B cell (primary cell): ENCODE measurements at regions of chr19 and their contacts with region 1.

Region 1: GRCh38 chr19:6862673-6863078 is 24.7 kb upstream of the ADGRE1 start:
- DNase-seq: peak; percentile 92
- ATAC-seq: peak; percentile 85
- H3K4me3 ChIP-seq: peak overlapping the region in 3 of 5 experiments; percentile 48 to 73 (median 58)
- H3K4me3 Mint-ChIP-seq: peak overlapping the region; percentile 96
- H3K27ac ChIP-seq: peak overlapping the region; percentile 52 to 89
- H3K27ac Mint-ChIP-seq: peak overlapping the region; percentile 92
- H3K4me1 ChIP-seq: peaks cover 0 to 5% of the 10 kb centered on the region in 2 donors
- H3K4me1 Mint-ChIP-seq: peaks cover 11% of the 10 kb centered on the region
- H3K27me3 ChIP-seq: peaks cover 0 to 3% (median 0%) of the 10 kb centered on the region in 4 experiments
- H3K27me3 Mint-ChIP-seq: peaks cover 3% of the 10 kb centered on the region
- CTCF ChIP-seq: peak; percentile 84

Region 2: GRCh38 chr19:6218491-6219162 is 644.0 kb before region 1 on chr19:
- CTCF ChIA-PET with region 1: interaction called, 43 read pairs
- POLR2A ChIA-PET with region 1: interaction called, 5 read pairs
- intact Hi-C with region 1: no loop called
- DNase-seq: peak; percentile 82
- ATAC-seq: peak; percentile 79
- H3K4me3 ChIP-seq: no peak overlapping the region
- H3K4me3 Mint-ChIP-seq: no peak overlapping the region
- H3K27ac ChIP-seq: no peak overlapping the region
- H3K27ac Mint-ChIP-seq: no peak overlapping the region
- H3K4me1 ChIP-seq: peaks cover 0 to 6% of the 10 kb centered on the region in 2 donors
- H3K4me1 Mint-ChIP-seq: peaks cover 3% of the 10 kb centered on the region
- H3K27me3 ChIP-seq: no peaks in the 10 kb centered on the region
- H3K27me3 Mint-ChIP-seq: no peaks in the 10 kb centered on the region
- CTCF ChIP-seq: peak; percentile 92

Region 3: DNA sequence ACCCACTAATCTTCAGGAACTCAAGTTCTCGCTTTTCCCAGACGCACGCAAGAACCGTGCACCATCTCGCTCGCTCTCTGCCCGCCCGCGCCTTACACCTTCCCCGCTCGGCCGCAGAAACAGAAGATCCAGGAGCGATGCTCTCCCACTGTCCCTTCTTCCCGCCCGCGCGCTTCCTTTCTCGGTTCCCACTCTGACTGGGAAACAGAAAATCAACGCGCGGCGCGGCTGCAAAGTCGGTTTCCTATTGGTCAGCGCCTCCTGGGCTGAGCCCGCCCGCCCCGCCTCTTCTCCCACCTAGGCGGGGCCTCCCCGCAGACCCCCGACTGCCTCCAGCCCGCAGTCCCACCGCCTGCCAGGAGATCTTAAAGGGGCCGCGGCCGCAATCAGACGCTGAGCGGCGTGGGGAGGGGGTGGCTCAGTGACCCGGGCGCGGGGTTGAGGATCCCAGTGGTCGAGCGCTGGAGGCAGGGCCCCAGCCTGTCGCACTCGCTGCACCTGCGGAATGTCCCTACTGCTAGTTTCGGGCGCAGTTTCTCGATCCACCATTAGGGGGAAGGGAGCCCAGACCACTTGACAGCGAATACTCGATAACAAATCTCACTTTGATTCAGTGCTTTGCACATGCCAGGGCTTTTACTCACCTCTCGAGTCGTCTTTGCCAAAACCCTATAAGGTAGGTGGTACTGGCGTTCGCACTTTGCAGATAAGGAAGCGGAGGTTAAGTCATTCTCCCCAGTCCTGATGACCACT is 402.4 kb before region 1 on chr19:
- CTCF ChIA-PET with region 1: no interaction called
- POLR2A ChIA-PET with region 1: no interaction called
- intact Hi-C with region 1: loop called (anchors 1 kb)
- DNase-seq: peak; percentile 99
- ATAC-seq: peak; percentile 84
- H3K4me3 ChIP-seq: peak overlapping the region; percentile 60 to 93 (median 78)
- H3K4me3 Mint-ChIP-seq: peak overlapping the region; percentile 91
- H3K27ac ChIP-seq: peak overlapping the region; percentile 76 to 86
- H3K27ac Mint-ChIP-seq: peak overlapping the region; percentile 78
- H3K4me1 ChIP-seq: peaks cover 11 to 34% of the 10 kb centered on the region in 2 donors
- H3K4me1 Mint-ChIP-seq: peaks cover 32% of the 10 kb centered on the region
- H3K27me3 ChIP-seq: peaks cover 0 to 15% (median 6%) of the 10 kb centered on the region in 4 experiments
- H3K27me3 Mint-ChIP-seq: no peaks in the 10 kb centered on the region
- CTCF ChIP-seq: peak; percentile 78

Region 4: DNA sequence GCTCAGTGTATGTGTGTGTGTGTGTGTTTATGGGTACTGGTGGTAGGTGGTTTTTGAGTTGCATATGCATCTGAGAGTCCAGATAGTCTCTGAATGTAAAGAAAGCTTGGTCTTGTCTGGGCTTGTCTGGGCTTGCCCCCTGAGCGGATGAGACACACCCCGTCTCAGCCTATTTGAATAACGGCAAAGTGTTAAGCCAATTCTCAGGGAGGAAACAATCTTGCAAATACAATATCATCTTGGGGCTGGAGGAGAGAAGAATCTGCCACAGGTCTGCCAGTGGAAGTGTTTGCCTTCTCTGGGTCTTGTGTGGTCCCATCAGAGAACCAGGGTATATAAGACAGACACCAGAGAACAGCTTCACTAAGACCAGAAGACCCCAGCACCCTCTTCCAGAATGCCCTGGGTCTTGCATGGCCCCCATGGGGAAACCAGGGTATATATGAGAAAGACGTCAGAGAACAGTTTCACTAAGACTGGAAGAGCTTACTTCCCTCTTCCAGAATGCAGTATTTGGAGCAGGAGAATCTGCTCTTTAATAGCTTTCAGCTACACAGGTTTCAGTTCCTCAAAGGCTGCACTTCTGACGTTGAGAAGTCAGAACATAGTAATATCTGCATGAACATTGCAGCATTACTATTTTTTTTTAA is 285.1 kb before region 1 on chr19:
- CTCF ChIA-PET with region 1: interaction called, 4 read pairs
- POLR2A ChIA-PET with region 1: no interaction called
- intact Hi-C with region 1: loop called (anchors 5 kb)
- DNase-seq: peak; percentile 88
- ATAC-seq: peak; percentile 85
- H3K4me3 ChIP-seq: peak overlapping the region in 1 of 5 experiments; percentile 3
- H3K4me3 Mint-ChIP-seq: no peak overlapping the region
- H3K27ac ChIP-seq: peak overlapping the region; percentile 68 to 78
- H3K27ac Mint-ChIP-seq: no peak overlapping the region
- H3K4me1 ChIP-seq: peaks cover 16 to 28% of the 10 kb centered on the region in 2 donors
- H3K4me1 Mint-ChIP-seq: peaks cover 21% of the 10 kb centered on the region
- H3K27me3 ChIP-seq: peaks cover 0 to 5% (median 0%) of the 10 kb centered on the region in 4 experiments
- H3K27me3 Mint-ChIP-seq: no peaks in the 10 kb centered on the region
- CTCF ChIP-seq: no peak

Region 5: DNA sequence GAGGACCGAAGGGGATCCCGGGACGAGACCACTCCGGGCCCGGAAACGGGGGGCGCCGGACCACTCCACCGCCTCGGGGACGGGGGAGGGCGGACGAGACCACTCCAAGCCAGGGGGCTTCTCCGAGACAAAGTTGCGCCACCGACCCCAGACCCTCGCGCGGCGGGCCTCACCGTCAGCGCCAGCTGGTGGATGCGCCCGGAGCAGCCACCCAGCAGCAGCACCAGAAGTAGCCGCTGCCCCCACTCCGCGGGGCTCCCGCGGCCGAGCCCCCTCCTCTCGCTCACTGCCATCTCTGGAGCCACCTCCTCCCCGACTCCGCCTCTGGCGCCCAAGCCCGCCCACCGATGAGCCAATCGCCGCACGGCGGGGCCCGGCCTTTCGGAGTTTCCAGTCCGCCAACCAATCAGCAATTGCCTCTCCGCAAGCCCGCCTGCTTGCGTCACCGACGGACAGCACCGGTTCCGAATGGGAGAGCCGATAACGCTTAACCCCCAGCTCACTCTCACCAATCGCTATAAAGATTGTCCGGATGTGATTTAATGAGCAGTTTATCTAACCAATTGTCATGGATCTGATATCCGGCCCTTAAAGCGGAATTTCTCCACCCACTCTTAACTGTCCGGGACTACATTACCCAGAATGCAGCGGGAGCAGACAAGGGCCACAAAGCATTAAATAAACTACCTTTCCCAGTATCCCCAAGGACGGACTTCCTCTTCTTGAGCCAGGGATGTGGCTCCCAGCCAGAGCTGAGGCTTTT is 125.2 kb before region 1 on chr19 and contains the start of gene GPR108:
- CTCF ChIA-PET with region 1: interaction called, 118 read pairs
- POLR2A ChIA-PET with region 1: interaction called, 11 read pairs
- intact Hi-C with region 1: no loop called
- DNase-seq: peak; percentile 99
- ATAC-seq: peak; percentile 73
- H3K4me3 ChIP-seq: peak within 1 kb of the TSS; percentile 69 to 89 (median 88)
- H3K4me3 Mint-ChIP-seq: peak within 1 kb of the TSS; percentile 94
- H3K27ac ChIP-seq: peak within 1 kb of the TSS; percentile 90 to 98
- H3K27ac Mint-ChIP-seq: peak within 1 kb of the TSS; percentile 99
- H3K4me1 ChIP-seq: peaks cover 39 to 51% of the 10 kb centered on the region in 2 donors
- H3K4me1 Mint-ChIP-seq: peaks cover 39% of the 10 kb centered on the region
- H3K27me3 ChIP-seq: no peaks in the 10 kb centered on the region
- H3K27me3 Mint-ChIP-seq: no peaks in the 10 kb centered on the region
- CTCF ChIP-seq: no peak
- total RNA-seq, gene GPR108: 78.8 and 79.0 TPM in 2 replicates

Region 6: DNA sequence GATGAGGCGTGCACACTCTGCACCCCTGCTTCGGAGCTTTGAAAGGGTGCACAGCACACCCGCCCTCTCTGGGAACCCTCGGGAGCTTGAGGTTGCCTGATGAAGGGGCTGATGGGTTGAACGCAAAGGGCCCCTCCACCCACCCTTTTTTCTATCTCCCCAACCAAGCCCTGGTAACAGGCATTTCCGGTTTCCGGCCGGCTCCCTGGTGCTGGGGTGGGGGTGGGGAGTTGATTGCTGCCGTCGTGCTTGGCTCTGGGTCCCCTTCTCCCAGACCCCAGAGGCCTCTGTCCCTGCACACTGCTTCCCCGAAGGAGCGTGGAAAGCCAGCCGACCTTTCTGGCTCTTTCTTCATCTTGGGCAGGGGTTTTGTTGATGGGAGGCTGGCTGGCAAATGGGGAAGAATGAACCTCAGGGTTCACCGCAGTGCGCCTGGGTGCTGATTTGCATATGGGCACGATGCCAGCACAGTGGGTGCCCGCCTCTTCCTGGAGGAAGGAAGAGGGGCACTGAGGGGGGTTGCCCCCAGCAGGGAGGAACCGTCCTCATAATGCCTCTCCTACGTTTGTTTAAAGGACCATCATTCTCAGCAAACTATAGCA is 61.1 kb before region 1 on chr19:
- CTCF ChIA-PET with region 1: interaction called, 8 read pairs
- POLR2A ChIA-PET with region 1: interaction called, 8 read pairs
- intact Hi-C with region 1: loop called (anchors 1 kb)
- DNase-seq: peak; percentile 95
- ATAC-seq: peak; percentile 74
- H3K4me3 ChIP-seq: peak overlapping the region; percentile 32 to 68 (median 61)
- H3K4me3 Mint-ChIP-seq: peak overlapping the region; percentile 95
- H3K27ac ChIP-seq: peak overlapping the region; percentile 75 to 83
- H3K27ac Mint-ChIP-seq: peak overlapping the region; percentile 98
- H3K4me1 ChIP-seq: peaks cover 44 to 83% of the 10 kb centered on the region in 2 donors
- H3K4me1 Mint-ChIP-seq: peaks cover 68% of the 10 kb centered on the region
- H3K27me3 ChIP-seq: no peaks in the 10 kb centered on the region
- H3K27me3 Mint-ChIP-seq: no peaks in the 10 kb centered on the region
- CTCF ChIP-seq: no peak

Region 7: GRCh38 chr19:6987850-6988249 is 125.2 kb after region 1 on chr19:
- CTCF ChIA-PET with region 1: no interaction called
- POLR2A ChIA-PET with region 1: no interaction called
- intact Hi-C with region 1: no loop called
- DNase-seq: no peak
- ATAC-seq: no peak
- H3K4me3 ChIP-seq: no peak overlapping the region
- H3K4me3 Mint-ChIP-seq: no peak overlapping the region
- H3K27ac ChIP-seq: no peak overlapping the region
- H3K27ac Mint-ChIP-seq: no peak overlapping the region
- H3K4me1 ChIP-seq: no peaks in the 10 kb centered on the region
- H3K4me1 Mint-ChIP-seq: no peaks in the 10 kb centered on the region
- H3K27me3 ChIP-seq: peaks cover 0 to 2% (median 0%) of the 10 kb centered on the region in 4 experiments
- H3K27me3 Mint-ChIP-seq: peaks cover 12% of the 10 kb centered on the region
- CTCF ChIP-seq: no peak